ENCODE measurements at regions of chr2 and their contacts with region 1.

Region 1: DNA sequence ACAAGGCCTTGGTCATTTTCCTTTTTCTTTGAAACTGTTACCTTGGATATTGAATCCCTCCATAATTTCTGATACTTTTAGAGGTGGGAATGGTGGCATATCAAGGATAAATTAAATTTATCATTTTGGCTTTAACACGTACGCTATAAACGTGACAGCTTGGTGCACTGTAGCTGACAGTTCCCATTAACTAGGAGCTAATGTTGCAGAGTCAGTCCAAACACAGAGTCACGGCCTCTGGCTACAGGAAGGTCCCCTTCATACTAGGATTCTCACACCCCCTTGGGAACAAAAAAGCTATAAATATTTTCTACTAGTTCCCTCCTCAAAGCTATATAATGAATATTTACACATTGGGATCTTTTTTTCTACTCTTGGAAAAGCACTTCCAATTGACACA is 17.7 kb upstream of the ERBB4 start:
- DNase-seq: no peak
- ATAC-seq: no peak
- H3K4me3 ChIP-seq: no peak overlapping the region
- H3K27ac ChIP-seq: no peak overlapping the region
- H3K4me1 ChIP-seq: no peaks in the 10 kb centered on the region
- H3K27me3 ChIP-seq: no peaks in the 10 kb centered on the region
- CTCF ChIP-seq: no peak
- POLR2A ChIP-seq: no peak

Region 2: DNA sequence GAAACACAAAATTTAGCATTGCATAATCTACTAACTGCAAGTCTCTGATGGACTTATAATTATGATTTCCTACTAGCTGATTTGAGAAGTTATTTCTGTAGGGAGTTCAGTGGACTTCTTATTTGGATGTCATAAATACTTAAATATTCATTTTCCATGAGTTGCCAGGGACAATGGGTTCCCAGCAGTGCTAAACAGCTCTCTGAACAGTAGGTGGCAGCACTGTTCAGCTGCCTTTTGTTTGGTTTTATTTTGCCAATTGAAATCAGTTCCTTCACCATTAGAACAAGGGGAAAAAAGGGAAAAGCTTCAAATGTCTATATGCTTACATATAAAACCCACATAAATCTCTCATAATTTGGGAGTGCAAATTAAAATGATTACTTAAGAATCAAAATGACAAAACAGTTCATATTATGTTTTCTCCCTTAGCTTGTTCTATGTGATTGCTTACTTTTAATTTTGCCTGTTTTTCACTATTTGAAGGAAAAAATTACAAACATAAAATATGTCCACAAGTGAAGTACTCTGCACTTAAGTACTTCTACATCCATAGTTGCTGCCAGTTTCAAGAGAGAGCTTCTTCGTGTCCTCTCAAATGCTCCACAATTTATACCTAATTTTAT is 1101.0 kb before region 1 on chr2:
- intact Hi-C with region 1: loop called in 1 of 10 experiments (anchors 5 kb)
- DNase-seq: no peak
- ATAC-seq: peak in 1 of 4 donors; percentile 54
- H3K4me3 ChIP-seq: no peak overlapping the region
- H3K27ac ChIP-seq: no peak overlapping the region
- H3K4me1 ChIP-seq: peaks cover 0 to 4% (median 0%) of the 10 kb centered on the region in 12 donors
- H3K27me3 ChIP-seq: no peaks in the 10 kb centered on the region
- CTCF ChIP-seq: peak; percentile 70 to 93 (median 82)
- POLR2A ChIP-seq: no peak